Activated naive CD4-positive, alpha-beta T cell treated with anti-CD3 and anti-CD28 coated beads for 36 hours (primary cell): ENCODE measurements at regions of chr1 and their contacts with region 1.

Region 1: DNA sequence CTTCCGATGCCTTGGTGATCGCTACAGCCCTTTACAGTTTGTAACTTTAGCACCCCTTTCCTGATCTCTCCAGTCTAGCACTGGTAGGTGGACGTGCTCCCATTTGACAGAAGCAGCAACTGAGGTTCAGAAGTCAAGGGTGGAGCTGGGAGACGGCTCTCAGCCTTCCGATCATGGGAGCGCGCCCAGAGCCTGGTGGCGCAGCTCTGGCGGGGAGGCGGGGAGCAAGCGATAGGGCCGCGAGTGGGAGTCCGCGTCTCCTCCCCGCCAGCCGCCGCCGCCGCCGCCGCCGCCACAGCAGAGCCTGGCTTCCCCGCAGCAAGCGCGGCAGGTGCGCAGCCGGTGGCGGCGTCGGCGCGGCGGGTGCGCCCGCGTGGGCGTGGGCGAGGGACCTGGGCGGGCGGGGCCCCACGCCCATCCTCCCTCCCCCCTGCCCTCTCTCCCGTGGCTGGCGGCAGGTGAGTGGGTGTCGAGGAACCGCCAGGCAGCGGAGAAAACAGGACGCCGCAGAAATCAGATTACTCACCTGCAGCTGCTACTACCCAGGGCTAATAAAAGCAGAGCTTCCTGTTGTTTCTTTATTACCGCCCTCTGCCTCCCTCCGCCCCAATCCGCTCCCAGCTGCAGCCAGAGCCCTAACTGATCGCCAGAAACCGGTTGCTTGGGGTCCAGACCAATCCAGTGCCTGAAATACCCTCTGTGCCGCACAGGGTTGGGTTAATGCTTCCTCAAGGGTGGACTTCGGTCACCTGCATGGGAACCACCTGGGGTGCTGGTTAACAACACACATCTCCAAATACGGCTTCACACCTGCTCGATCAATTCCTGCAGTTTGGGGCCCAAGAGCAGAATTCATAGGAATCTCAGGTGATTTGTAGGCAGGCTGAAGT is 60.2 kb upstream of the ID3 start:
- DNase-seq: peak; percentile 91
- H3K4me3 Mint-ChIP-seq: peak overlapping the region; percentile 67
- H3K27ac Mint-ChIP-seq: peak overlapping the region; percentile 69
- H3K4me1 Mint-ChIP-seq: peaks cover 84% of the 10 kb centered on the region
- H3K27me3 Mint-ChIP-seq: no peaks in the 10 kb centered on the region

Region 2: DNA sequence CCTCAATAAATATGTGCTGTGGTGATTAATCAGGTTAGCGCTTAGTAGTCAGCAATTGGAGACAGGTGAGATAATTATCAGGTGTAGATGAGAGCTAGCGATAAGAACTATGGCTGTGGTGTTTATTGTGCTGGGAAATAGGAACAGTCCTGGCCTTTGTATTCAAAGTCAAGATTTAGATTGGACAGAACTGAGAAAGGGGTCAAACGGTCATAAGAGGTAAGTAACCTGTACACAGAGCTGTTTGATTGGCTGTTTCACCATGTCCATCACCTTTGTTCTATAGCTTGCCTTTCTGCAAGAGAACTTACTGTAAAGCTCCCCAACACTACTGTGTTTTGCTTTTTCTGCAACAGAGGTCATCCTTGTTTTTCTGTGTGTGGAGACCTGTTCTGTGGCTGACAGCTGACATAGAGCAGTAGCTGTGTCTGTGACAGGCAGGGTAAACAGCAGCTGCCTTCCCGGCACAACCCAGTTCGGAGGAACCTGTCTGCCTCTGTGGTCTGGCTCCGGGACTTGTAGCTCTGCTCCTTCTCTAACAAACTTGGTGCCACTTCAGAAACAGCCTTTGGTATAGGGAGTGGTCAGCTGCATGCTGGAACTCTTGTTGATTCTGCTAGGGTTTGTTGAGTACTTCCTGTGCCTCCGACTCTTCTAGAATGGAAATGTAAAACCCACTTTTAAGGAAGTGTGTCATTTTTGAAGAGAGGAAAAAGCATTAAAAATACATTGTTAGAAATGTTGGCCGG is 1588.2 kb before region 1 on chr1:
- CTCF ChIA-PET with region 1: no interaction called
- intact Hi-C with region 1: loop called (anchors 5 kb)
- DNase-seq: peak; percentile 74
- H3K4me3 Mint-ChIP-seq: peak overlapping the region; percentile 56
- H3K27ac Mint-ChIP-seq: peak overlapping the region; percentile 84
- H3K4me1 Mint-ChIP-seq: peaks cover 59% of the 10 kb centered on the region
- H3K27me3 Mint-ChIP-seq: no peaks in the 10 kb centered on the region